HEK293 (cell line): ENCODE measurements at regions of chr3 and their contacts with region 1.

Region 1: DNA sequence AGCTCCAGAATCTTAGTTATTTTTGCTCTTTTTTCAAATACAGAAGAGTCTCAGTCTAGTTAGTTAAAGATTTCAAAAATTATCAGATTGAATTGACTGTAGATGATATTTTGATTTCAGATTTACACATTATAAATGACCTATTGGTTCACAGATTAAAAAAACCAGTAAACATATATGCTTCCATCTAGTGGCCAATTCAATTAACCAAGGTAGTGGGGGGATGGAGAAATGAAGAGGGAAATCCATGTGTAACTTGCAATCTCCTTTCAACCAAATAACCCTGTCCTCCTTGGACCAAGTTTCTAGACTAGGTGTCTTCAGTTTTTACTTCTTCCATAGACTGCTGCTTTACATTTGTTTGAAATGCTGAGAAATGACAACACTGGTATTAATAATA is 789.8 kb downstream of the ROBO1 start:
- H3K4me3 ChIP-seq: no peak overlapping the region
- H3K27ac ChIP-seq: no peak overlapping the region
- H3K4me1 ChIP-seq: peaks cover 13% of the 10 kb centered on the region
- CTCF ChIP-seq: no peak; the same call in 1 of the 2 replicates

Region 2: GRCh38 chr3:78988324-78988723 is 10.3 kb after region 1 on chr3:
- CTCF ChIA-PET with region 1: interaction called, 10 read pairs
- POLR2A ChIA-PET with region 1: no interaction called
- H3K4me3 ChIP-seq: no peak overlapping the region
- H3K27ac ChIP-seq: no peak overlapping the region
- H3K4me1 ChIP-seq: peaks cover 18% of the 10 kb centered on the region
- CTCF ChIP-seq: peak; percentile 18; the same call in 1 of the 2 replicates